Thyroid gland (tissue), 4 donors: ENCODE measurements at regions of chr2 and their contacts with region 1.

Region 1: GRCh38 chr2:62467475-62468321 is 38.3 kb downstream of the TMEM17 start:
- DNase-seq: peak; percentile 66 to 69
- H3K4me3 ChIP-seq: no peak overlapping the region
- H3K27ac ChIP-seq: peak overlapping the region; percentile 43 to 79 (median 72)
- H3K4me1 ChIP-seq: peaks cover 48 to 59% of the 10 kb centered on the region in 2 donors
- H3K27me3 ChIP-seq: no peaks in the 10 kb centered on the region
- CTCF ChIP-seq: peak in 1 of 6 experiments; percentile 5
- POLR2A ChIP-seq: no peak

Region 2: DNA sequence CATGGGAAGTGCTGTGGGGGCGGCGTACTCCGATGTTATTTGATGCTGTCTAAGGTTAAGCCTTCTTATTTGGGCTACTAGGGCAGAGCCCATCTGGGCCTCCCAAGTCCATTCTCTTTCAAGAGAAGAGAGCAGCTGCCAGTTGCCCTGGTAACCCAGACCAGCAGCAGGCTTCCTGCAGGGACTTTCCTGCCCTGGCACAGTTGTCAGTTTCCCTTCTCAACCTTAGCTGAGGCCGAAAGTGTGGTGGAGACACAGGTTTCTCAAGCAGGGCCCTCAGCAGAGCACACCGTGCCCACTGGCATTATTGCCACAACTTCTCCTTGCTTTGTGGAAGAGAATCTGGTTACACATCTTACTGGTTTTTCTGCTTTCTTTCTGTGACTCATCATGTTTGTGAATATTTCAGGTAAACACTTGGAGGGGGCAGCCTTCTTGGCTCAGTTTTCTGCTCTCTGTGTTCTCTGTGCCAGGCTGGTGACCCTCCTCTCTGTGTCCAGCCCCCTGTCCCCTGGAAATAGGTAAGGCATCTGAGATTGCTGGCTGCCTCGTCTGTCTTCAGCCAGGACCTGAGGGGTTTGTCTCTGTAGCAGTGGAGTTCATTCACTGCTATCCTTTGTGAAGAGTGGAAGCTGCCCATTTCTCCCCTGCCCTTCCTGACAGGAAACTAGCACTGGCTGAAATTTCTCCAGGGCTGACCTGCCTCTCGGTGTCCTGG is 160.8 kb before region 1 on chr2:
- intact Hi-C with region 1: no loop called
- DNase-seq: peak; percentile 68 to 80
- H3K4me3 ChIP-seq: no peak overlapping the region
- H3K27ac ChIP-seq: peak overlapping the region; percentile 55 to 93 (median 85)
- H3K4me1 ChIP-seq: peaks cover 16 to 45% of the 10 kb centered on the region in 2 donors
- H3K27me3 ChIP-seq: no peaks in the 10 kb centered on the region
- CTCF ChIP-seq: no peak
- POLR2A ChIP-seq: no peak

Region 3: DNA sequence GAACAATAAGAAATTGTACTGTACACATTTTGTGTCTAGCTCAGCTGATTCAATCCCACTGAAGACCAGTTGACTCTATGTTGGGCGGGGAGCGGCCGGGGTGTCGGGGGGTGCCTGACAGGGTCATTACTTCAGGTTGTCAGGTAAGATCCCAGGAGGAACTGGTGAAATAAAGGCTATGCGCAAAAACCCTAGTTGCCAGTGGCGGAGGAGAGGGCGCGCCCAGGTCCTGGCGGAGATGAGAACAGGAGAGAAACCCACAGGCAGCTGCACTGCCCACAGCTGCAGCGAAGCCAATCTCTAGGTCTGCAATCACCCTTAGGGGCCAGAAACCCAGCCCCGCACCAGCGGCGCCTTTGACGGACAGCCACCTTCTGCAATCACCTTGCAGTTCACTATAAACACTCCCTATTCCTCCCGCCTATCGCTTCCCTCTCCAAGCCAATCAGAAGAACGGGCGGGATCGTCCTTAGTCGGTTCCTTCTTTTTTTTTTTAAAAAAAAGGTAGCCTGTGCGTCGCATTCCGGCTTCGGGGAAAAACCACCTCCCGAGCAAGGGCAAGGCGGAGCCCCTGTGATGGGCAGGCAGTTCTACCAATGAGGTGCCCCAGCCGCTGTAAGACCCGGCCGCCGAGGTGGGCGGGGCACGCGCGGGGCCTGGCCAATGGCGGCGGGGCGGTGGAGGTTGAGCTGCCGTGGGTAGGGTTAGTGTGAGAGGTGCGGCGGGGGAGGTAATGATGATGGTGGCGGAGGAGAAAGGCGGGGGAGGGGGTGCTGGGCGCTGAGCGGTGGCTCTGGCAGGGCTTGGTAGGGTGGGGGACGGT is 237.5 kb after region 1 on chr2 and contains the start of gene EHBP1:
- intact Hi-C with region 1: loop called (anchors 10 kb)
- DNase-seq: peak; percentile 99
- H3K4me3 ChIP-seq: peak within 1 kb of the TSS; percentile 5 to 89 (median 87)
- H3K27ac ChIP-seq: peak within 1 kb of the TSS; percentile 80 to 91 (median 91)
- H3K4me1 ChIP-seq: peaks cover 22 to 27% of the 10 kb centered on the region in 2 donors
- H3K27me3 ChIP-seq: no peaks in the 10 kb centered on the region
- CTCF ChIP-seq: no peak
- POLR2A ChIP-seq: peak in 1 of 2 donors; percentile 97
- total RNA-seq, gene EHBP1: 49.9 to 68.8 (median 57.0) TPM